ENCODE measurements at regions of chr2 and their contacts with region 1.

Region 1: GRCh38 chr2:191869178-191869577 is 22.3 kb upstream of the CAVIN2 start:
- DNase-seq: no peak
- H3K4me3 ChIP-seq: no peak overlapping the region
- H3K27me3 ChIP-seq: no peaks in the 10 kb centered on the region
- CTCF ChIP-seq: peak; percentile 41; the same call in 1 of the 2 replicates

Region 2: GRCh38 chr2:191078165-191078867 is 790.9 kb before region 1 on chr2:
- CTCF ChIA-PET with region 1: no interaction called
- POLR2A ChIA-PET with region 1: interaction called, 22 read pairs
- DNase-seq: no peak
- H3K4me3 ChIP-seq: no peak overlapping the region
- H3K27me3 ChIP-seq: no peaks in the 10 kb centered on the region
- CTCF ChIP-seq: no peak

Region 3: GRCh38 chr2:191889931-191890330 is 20.8 kb after region 1 on chr2:
- CTCF ChIA-PET with region 1: no interaction called
- POLR2A ChIA-PET with region 1: no interaction called
- DNase-seq: no peak
- H3K4me3 ChIP-seq: no peak overlapping the region
- H3K27me3 ChIP-seq: no peaks in the 10 kb centered on the region
- CTCF ChIP-seq: no peak

Region 4: GRCh38 chr2:191922736-191923651 is 53.8 kb after region 1 on chr2:
- CTCF ChIA-PET with region 1: no interaction called
- POLR2A ChIA-PET with region 1: no interaction called
- DNase-seq: no peak
- H3K4me3 ChIP-seq: no peak overlapping the region
- H3K27me3 ChIP-seq: no peaks in the 10 kb centered on the region
- CTCF ChIP-seq: no peak

Region 5: GRCh38 chr2:191995285-191995684 is 126.1 kb after region 1 on chr2:
- CTCF ChIA-PET with region 1: no interaction called
- POLR2A ChIA-PET with region 1: no interaction called
- DNase-seq: no peak
- H3K4me3 ChIP-seq: no peak overlapping the region
- H3K27me3 ChIP-seq: no peaks in the 10 kb centered on the region
- CTCF ChIP-seq: no peak

Region 6: GRCh38 chr2:192016265-192016664 is 147.1 kb after region 1 on chr2:
- CTCF ChIA-PET with region 1: no interaction called
- POLR2A ChIA-PET with region 1: no interaction called
- DNase-seq: no peak
- H3K4me3 ChIP-seq: no peak overlapping the region
- H3K27me3 ChIP-seq: no peaks in the 10 kb centered on the region
- CTCF ChIP-seq: no peak

Region 7: DNA sequence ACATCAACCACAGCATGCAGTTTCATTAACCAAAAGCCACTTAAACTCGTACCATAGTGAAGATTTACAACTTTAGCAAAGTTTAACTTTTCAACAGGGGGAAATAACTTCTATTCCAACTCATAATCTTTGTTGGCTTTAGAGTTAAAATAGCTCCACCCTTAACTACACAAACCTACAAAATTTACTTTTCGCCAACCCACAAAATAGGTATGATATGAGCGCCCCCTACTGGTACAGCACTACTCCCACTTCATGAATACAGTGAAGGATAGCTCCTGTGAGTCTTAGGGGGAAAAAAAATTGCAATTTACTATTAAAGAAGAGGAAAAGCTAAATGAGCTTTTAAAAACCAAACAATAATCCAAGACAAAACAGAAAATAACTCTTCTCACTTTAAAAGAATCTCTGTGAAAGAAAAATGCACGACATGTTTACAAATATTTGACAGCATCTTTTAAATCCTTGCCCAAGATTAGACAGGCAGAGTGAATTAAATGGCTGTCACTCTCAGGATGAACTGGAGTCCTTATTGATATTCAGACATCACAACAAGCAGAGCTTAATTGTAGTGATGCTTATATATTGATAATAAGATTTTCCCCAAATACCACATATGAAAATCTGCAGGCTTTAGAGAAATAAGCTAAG is 293.3 kb after region 1 on chr2:
- CTCF ChIA-PET with region 1: interaction called, 47 read pairs
- POLR2A ChIA-PET with region 1: no interaction called
- DNase-seq: peak; percentile 21
- H3K4me3 ChIP-seq: no peak overlapping the region
- H3K27me3 ChIP-seq: peaks cover 1% of the 10 kb centered on the region; the same call in 1 of the 2 replicates
- CTCF ChIP-seq: peak; percentile 86